HCT116 (cell line): ENCODE measurements at regions of chr20 and their contacts with region 1.

Region 1: DNA sequence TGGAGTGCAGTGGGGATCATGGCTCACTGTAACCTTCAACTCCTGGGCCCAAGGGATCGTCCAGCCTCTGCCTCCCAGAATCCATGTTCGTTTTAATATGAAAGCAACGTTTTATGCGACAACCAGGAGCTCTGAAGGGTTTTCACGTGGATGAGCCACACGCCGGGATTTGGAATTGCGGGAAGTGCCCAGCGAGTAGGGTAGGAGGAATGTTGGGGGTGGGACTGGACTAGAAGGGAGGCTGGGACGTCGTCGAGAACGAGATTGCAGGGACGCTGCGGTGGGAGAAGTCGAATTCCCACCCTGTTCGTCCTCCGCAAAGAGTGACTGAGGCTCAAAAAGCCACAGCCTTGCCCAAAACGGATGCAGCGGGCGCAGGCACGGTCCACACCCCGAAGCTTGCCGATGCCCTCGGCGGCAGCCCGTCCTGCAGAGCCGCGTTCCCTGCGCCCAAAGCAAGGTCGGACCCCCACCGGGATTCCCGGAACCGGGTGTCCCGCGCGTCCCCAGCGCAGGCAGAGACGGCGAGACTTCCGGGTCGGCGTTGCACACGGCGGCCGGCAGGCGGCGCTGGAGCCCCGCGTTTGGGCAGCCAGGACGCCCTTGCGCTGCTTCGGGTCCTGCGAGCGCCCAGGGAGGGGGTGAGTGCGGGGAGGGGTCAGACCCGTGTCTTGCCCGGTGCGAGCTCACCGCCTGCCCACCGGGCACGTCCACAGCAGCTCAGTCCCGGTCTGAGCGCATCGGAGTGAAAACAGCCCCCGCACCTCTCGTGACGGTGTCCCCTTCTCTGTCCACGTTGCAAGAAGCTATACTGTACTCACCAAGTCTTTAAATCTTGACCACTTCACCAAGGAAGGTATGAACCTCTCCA is 87.8 kb downstream of the DHX35 start:
- DNase-seq: peak; percentile 40
- ATAC-seq: peak; percentile 88
- H3K4me3 ChIP-seq: peak overlapping the region; percentile 56 to 66
- H3K27ac ChIP-seq: peak overlapping the region; percentile 58; the same call in 1 of the 2 replicates
- H3K4me1 ChIP-seq: peaks cover 4 to 15% of the 10 kb centered on the region in 2 experiments; a peak in 3 of 4 replicates
- H3K27me3 ChIP-seq: no peaks in the 10 kb centered on the region
- CTCF ChIP-seq: peak; percentile 78 to 94 (median 81)
- POLR2A ChIP-seq: no peak
- RAD21 ChIP-seq: peak; percentile 94

Region 2: GRCh38 chr20:38893565-38894090 is 156.3 kb before region 1 on chr20:
- CTCF ChIA-PET with region 1: no interaction called
- POLR2A ChIA-PET with region 1: no interaction called
- RAD21 ChIA-PET with region 1: no interaction called
- intact Hi-C with region 1: loop called (anchors 5 kb)
- DNase-seq: peak; percentile 19
- ATAC-seq: peak; percentile 98
- H3K4me3 ChIP-seq: no peak overlapping the region
- H3K27ac ChIP-seq: no peak overlapping the region
- H3K4me1 ChIP-seq: peaks cover 5 to 17% of the 10 kb centered on the region in 2 experiments; a peak in 3 of 4 replicates
- H3K27me3 ChIP-seq: peaks cover 5% of the 10 kb centered on the region; the same call in 1 of the 2 replicates
- CTCF ChIP-seq: peak; percentile 77 to 94 (median 85)
- POLR2A ChIP-seq: no peak
- RAD21 ChIP-seq: peak; percentile 91

Region 3: GRCh38 chr20:38926142-38926933 is 123.6 kb before region 1 on chr20 and contains the start of gene FAM83D:
- CTCF ChIA-PET with region 1: interaction called, 4 read pairs
- POLR2A ChIA-PET with region 1: no interaction called
- RAD21 ChIA-PET with region 1: no interaction called
- intact Hi-C with region 1: loop called (anchors 1 kb)
- DNase-seq: peak; percentile 97
- ATAC-seq: peak; percentile 91
- H3K4me3 ChIP-seq: peak within 1 kb of the TSS; percentile 93 to 94
- H3K27ac ChIP-seq: peak within 1 kb of the TSS; percentile 83
- H3K4me1 ChIP-seq: peaks cover 8 to 31% of the 10 kb centered on the region in 2 experiments
- H3K27me3 ChIP-seq: peaks cover 4% of the 10 kb centered on the region; the same call in 1 of the 2 replicates
- CTCF ChIP-seq: no peak; a peak in 2 of 6 replicates
- POLR2A ChIP-seq: peak; percentile 94
- RAD21 ChIP-seq: peak; percentile 76
- total RNA-seq, gene FAM83D: 51.1 TPM

Region 4: DNA sequence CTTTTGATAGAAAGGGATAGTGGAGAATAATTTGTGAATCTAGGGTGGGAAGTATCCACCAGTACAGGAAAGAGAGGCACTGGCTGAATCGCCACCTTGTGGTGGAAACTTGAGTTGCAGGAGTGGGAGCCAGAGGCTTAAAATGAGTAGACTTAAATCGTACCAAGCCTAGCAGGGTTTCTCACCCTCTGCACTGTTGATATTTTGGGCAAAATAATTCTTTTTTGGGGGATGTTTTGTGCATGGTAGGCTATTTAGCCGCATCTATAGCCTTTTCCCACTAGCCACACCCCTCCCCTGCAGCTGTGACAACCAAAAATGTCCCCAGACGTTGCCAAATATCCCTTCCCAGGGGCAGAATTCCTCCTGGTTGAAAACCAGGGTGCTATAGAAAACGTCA is 31.3 kb after region 1 on chr20:
- CTCF ChIA-PET with region 1: interaction called, 29 read pairs
- POLR2A ChIA-PET with region 1: no interaction called
- RAD21 ChIA-PET with region 1: interaction called in 1 of 2 experiments, 3 read pairs
- intact Hi-C with region 1: loop called (anchors 1 kb)
- DNase-seq: peak; percentile 62
- ATAC-seq: peak; percentile 92
- H3K4me3 ChIP-seq: no peak overlapping the region
- H3K27ac ChIP-seq: no peak overlapping the region
- H3K4me1 ChIP-seq: 0 out of 4 replicates have a peak, but pooled peaks cover 0 to 7% of the 10 kb centered on the region in 2 experiments
- H3K27me3 ChIP-seq: peaks cover 6% of the 10 kb centered on the region; the same call in 1 of the 2 replicates
- CTCF ChIP-seq: peak; percentile 76 to 89 (median 85)
- POLR2A ChIP-seq: no peak
- RAD21 ChIP-seq: peak; percentile 72

Region 5: DNA sequence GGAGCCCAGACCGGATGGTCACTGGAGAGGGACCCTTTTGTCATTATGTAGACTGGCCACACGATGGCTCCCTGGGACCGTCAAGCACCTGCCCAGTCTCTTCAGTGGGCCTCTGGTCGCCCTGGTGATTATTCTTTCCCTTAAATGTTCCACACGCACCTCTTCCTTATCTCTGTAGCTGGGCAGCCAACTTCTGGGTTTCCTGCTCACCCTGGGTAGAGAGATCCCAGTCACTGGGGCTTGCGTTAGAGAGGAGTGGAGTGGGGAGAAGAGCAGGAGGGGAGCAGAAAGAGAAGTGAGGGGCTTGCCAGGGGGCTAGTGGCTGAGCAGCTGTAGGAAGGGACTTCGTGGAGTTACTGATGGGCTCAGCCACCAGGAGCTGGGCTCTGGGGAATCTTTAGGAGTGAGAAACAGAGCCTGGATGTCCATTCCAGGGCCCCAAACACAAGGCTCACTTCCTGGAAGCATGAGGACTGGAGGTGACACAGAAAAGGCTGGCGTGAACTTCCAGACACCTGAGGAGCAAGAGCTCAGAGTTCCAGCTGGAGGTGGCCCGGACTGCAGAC is 62.3 kb after region 1 on chr20:
- CTCF ChIA-PET with region 1: interaction called, 11 read pairs
- POLR2A ChIA-PET with region 1: no interaction called
- RAD21 ChIA-PET with region 1: no interaction called
- intact Hi-C with region 1: no loop called
- DNase-seq: peak; percentile 50
- ATAC-seq: peak; percentile 76
- H3K4me3 ChIP-seq: no peak overlapping the region
- H3K27ac ChIP-seq: no peak overlapping the region
- H3K4me1 ChIP-seq: peaks cover 30 to 53% of the 10 kb centered on the region in 2 experiments
- H3K27me3 ChIP-seq: peaks cover 6% of the 10 kb centered on the region; the same call in 1 of the 2 replicates
- CTCF ChIP-seq: peak; percentile 57 to 81 (median 70)
- POLR2A ChIP-seq: no peak
- RAD21 ChIP-seq: peak; percentile 90

Region 6: DNA sequence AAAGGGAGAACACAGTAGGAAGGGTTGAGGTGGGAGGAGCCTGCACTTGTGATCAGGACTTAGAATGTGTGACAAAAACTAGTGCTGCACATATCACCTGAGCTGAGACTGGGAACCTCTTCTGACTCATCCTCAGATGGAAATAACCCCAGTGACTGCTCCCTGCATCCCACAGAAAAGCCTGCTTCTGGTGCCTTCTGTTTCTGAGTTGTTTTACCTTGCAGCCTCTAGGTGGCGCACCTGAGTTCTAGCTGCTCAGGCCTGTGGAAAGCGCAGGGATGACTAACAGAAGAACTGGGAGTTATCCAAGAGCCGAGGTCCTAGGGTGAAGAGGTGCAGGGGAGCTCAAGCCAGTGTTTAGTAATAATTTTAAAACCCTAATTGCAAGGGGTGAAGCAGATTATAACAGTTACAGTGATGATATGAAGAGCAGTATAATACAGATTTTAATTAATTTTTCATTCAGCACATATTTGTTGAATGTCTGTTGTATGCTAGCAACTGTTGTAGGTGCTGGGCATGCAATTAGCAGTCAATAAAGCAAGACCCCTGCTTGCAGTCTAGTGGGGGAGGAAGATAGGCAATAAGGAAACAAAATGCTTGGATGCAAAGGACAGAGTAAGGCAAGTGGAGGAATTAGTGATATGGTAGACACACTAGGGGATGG is 214.7 kb after region 1 on chr20:
- CTCF ChIA-PET with region 1: interaction called, 12 read pairs
- POLR2A ChIA-PET with region 1: no interaction called
- RAD21 ChIA-PET with region 1: no interaction called
- intact Hi-C with region 1: no loop called
- DNase-seq: peak; percentile 60
- ATAC-seq: peak; percentile 90
- H3K4me3 ChIP-seq: no peak overlapping the region
- H3K27ac ChIP-seq: no peak overlapping the region
- H3K4me1 ChIP-seq: no peaks in the 10 kb centered on the region
- H3K27me3 ChIP-seq: no peaks in the 10 kb centered on the region
- CTCF ChIP-seq: peak; percentile 62 to 93 (median 91); a peak in 5 of 6 replicates
- POLR2A ChIP-seq: no peak
- RAD21 ChIP-seq: peak; percentile 50